Activated naive CD4-positive, alpha-beta T cell treated with anti-CD3 and anti-CD28 coated beads, Interleukin-2, amount 10 ng/mL, durations not matched to agents 7 days and 5 days (primary cell): ENCODE measurements at regions of chr12 and their contacts with region 1.

Region 1: GRCh38 chr12:106223485-106224354 is 24.1 kb downstream of the CKAP4 start:
- DNase-seq: peak; percentile 82
- H3K4me3 Mint-ChIP-seq: no peak overlapping the region
- H3K27ac Mint-ChIP-seq: no peak overlapping the region
- H3K4me1 Mint-ChIP-seq: peaks cover 29% of the 10 kb centered on the region
- H3K27me3 Mint-ChIP-seq: peaks cover 14% of the 10 kb centered on the region

Region 2: GRCh38 chr12:106282457-106283097 is 58.9 kb after region 1 on chr12:
- CTCF ChIA-PET with region 1: interaction called, 135 read pairs
- DNase-seq: peak; percentile 66
- H3K4me3 Mint-ChIP-seq: no peak overlapping the region
- H3K27ac Mint-ChIP-seq: no peak overlapping the region
- H3K4me1 Mint-ChIP-seq: peaks cover 8% of the 10 kb centered on the region
- H3K27me3 Mint-ChIP-seq: peaks cover 20% of the 10 kb centered on the region

Region 3: GRCh38 chr12:106302401-106303201 is 78.9 kb after region 1 on chr12 and contains the start of gene TCP11L2:
- CTCF ChIA-PET with region 1: interaction called, 12 read pairs
- DNase-seq: peak; percentile 92
- H3K4me3 Mint-ChIP-seq: peak within 1 kb of the TSS; percentile 89
- H3K27ac Mint-ChIP-seq: peak within 1 kb of the TSS; percentile 99
- H3K4me1 Mint-ChIP-seq: peaks cover 62% of the 10 kb centered on the region
- H3K27me3 Mint-ChIP-seq: no peaks in the 10 kb centered on the region

Region 4: DNA sequence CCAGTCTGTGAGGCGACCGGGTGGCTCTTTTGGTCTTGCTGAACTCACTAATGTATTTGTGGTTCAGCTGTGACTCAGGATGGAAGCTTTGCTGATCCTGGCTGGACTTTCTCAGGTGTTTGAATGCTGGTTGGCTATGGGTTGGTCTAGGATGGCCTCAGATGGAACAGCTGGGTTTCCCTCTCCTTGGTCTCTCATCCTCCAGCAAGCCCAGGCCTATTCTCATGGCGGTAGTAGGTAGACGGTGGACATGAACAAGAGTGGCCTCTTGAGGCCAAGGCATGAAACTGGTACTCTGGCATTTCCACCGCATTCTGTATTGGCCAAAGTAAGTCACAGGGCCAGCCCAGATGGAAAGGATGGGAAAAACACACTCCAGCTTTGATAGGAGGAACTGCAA is 122.0 kb after region 1 on chr12:
- CTCF ChIA-PET with region 1: interaction called, 10 read pairs
- DNase-seq: no peak
- H3K4me3 Mint-ChIP-seq: no peak overlapping the region
- H3K27ac Mint-ChIP-seq: no peak overlapping the region
- H3K4me1 Mint-ChIP-seq: no peaks in the 10 kb centered on the region
- H3K27me3 Mint-ChIP-seq: no peaks in the 10 kb centered on the region

Region 5: DNA sequence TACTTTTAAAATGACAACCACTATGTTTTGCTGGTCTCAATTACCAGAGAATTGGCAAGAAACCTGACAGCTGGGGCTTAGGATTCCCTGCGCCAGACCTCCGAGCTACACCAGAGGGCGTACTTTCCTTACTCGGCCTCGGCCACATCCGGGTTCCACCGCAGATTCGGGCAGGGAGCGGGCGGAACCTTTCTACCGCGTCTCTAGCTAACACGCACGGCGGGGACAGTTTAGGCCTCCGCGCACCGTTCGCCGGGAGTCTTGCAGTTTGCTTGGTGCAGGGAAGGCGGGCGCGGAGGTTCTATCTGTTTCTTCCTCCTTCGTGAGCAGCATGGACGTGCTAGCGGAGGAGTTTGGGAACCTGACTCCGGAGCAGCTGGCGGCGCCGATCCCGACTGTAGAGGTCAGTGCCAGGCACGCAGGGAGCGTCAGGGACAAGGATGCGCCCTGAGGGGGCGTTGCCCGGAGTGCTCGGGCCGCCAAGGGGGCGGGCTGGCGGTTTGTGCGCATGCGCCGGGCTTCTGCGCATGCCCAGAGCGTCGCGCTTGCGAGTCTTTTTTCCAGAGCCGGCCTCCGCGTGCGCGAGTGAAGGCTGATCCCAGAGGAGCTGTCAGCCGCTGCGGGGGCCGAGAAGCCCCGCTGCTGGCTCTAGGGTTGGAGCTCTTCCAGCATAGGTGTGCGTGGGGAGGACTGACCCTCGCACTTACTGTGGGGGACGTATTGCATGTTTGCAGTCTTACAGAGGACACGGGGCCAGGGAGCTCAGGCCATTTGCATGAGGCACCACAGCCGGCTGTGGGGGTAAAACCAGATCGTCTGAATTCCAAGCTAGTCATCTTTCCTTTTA is 134.1 kb after region 1 on chr12 and contains the start of gene POLR3B:
- CTCF ChIA-PET with region 1: interaction called, 16 read pairs
- DNase-seq: peak; percentile 96
- H3K4me3 Mint-ChIP-seq: peak within 1 kb of the TSS; percentile 88
- H3K27ac Mint-ChIP-seq: peak within 1 kb of the TSS; percentile 94
- H3K4me1 Mint-ChIP-seq: peaks cover 16% of the 10 kb centered on the region
- H3K27me3 Mint-ChIP-seq: peaks cover 7% of the 10 kb centered on the region